Vagina (tissue), 2 donors: ENCODE measurements at regions of chr6 and their contacts with region 1.

Region 1: GRCh38 chr6:63765828-63766227 is 130.2 kb downstream of the PHF3 start:
- DNase-seq: no peak
- H3K4me3 ChIP-seq: no peak overlapping the region
- H3K27ac ChIP-seq: no peak overlapping the region
- H3K4me1 ChIP-seq: no peaks in the 10 kb centered on the region
- H3K27me3 ChIP-seq: no peaks in the 10 kb centered on the region
- CTCF ChIP-seq: no peak
- POLR2A ChIP-seq: no peak

Region 2: DNA sequence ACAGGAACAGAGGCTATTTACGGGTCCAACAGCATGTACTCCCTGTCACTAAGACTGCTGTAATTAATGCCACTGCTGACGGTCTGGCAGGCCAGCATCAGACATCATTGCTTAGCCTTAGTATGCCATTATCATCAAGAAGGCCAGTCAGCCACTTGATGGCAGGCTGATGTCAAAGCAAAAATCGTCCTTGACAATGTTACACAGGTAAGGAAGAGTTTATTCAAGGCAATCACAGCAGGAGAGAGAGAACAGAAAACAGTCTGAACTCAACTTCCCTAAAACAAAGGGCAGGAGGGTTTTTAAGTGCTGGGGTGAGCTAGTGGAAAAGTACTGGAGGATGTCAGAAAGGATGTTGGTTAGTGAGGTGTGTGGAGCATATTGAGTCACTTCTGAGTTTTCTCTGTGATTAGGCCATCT is 529.4 kb before region 1 on chr6:
- intact Hi-C with region 1: no loop called
- DNase-seq: no peak
- H3K4me3 ChIP-seq: no peak overlapping the region
- H3K27ac ChIP-seq: no peak overlapping the region
- H3K4me1 ChIP-seq: no peaks in the 10 kb centered on the region
- H3K27me3 ChIP-seq: no peaks in the 10 kb centered on the region
- CTCF ChIP-seq: no peak
- POLR2A ChIP-seq: no peak

Region 3: DNA sequence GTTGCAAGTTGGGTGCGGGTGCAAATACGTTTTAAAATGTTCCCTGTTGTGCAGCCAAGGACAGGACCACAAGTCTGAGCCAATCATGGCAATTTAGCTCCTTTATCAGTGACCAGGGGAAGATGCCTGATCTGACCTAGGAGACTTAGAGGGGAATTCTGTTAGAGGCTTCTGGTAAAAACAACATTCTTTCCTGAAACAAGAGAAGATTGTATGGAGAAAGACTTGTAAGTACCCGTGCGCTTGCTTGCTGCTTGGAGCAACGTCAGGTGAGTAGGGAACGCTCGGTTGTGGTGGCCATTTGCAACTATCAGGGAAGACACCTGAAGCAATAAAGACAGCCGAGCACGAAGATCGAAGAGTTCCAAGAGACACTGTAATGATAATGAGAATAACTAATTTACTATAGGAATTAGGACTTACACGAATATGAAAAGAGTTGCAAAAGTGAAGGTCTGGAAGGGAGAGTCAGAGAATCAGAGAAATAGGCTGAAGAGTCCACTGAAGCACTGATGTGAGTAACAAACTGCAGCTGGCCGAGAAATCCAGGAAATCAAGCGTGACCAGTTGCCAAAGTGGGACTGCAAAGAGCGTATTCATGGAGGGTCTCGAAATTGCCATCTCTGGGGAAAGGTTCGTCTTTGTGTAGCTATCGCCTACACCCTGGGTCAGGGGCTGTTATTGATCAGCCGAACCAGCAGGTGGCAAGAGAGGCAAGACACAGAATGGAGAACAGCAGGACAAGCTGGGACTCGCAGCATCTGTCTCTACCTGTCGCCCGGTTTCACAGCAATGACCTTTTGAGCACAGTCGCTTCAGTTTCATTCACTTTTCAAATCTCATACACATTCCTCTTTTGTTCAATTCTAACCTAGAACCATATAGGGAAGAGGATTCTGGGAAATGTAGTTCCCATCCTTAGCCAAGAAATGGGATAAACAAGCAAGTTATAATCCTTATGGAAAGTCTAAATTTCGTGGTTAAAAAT is 167.5 kb before region 1 on chr6:
- intact Hi-C with region 1: loop called (anchors 5 kb)
- DNase-seq: no peak
- H3K4me3 ChIP-seq: peak overlapping the region; percentile 34 to 45
- H3K27ac ChIP-seq: no peak overlapping the region
- H3K4me1 ChIP-seq: peaks cover 7% of the 10 kb centered on the region
- H3K27me3 ChIP-seq: no peaks in the 10 kb centered on the region
- CTCF ChIP-seq: peak; percentile 37 to 88 (median 79)
- POLR2A ChIP-seq: no peak